Common myeloid progenitor, CD34-positive (primary cell): ENCODE measurements at regions of chr1 and their contacts with region 1.

Region 1: DNA sequence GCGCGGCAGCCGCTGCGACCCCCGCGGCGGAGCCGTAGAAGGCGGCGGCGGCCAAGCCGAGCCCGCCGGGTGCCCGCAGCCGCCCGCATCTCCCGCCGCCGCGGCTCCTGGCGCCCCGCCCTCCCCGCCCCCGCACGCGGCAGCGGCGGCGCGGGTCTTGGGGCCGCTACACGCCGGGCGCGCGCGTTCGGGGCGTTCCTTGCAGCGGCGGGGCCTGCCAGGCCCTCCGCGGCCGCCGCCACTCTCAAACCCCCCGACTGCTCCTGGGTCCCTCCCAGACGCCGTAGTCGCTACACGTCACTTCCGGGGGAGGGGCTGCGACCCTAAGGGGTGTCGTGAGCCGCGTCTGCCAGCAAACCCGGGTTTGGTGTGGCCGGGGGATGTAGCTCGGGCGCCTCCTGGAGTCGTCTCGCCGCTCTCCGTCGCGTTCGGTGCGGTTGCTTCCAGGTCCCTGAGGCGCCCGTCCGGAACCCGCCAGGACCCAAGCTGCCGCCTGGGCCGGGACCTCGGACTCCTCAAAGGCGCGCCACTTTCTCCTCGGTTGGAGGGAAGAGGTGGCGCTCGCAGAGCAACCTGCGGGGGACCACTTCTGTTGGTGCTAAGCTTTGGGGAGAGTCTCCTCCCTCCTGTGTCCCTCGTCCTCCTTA is at the start of gene ELK4:
- DNase-seq: peak; percentile 99 to 100 (median 99)
- H3K4me3 ChIP-seq: peak within 1 kb of the TSS; percentile 67 to 95 (median 90)
- H3K27ac ChIP-seq: peak within 1 kb of the TSS; percentile 80 to 92
- H3K4me1 ChIP-seq: peaks cover 8 to 26% (median 21%) of the 10 kb centered on the region in 4 experiments
- H3K27me3 ChIP-seq: no peaks in the 10 kb centered on the region

Region 2: GRCh38 chr1:205077158-205077933 is 554.5 kb before region 1 on chr1:
- CTCF ChIA-PET with region 1: no interaction called
- POLR2A ChIA-PET with region 1: no interaction called
- DNase-seq: no peak
- H3K4me3 ChIP-seq: no peak overlapping the region
- H3K27ac ChIP-seq: no peak overlapping the region
- H3K4me1 ChIP-seq: no peaks in the 10 kb centered on the region
- H3K27me3 ChIP-seq: no peaks in the 10 kb centered on the region

Region 3: DNA sequence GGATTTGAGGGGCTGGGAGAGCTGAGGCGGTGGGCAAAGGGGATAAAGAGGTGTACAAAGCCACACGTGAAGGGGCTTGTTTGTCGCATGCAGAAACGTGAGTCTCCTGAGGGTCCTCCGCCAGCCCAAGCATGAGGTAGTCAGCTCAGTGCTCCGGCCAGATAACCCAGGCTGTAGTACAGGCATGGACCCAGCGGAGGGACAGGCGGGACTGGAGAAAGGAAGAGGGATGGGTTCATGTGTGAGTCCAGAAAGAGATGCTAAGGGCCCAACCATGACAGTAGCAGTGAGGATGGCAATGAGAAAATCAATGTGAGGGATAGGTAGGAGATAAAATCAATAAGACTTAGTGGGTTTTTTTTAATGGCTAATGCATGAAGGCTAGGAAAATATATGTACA is 13.7 kb after region 1 on chr1:
- CTCF ChIA-PET with region 1: interaction called, 18 read pairs
- POLR2A ChIA-PET with region 1: interaction called, 3 read pairs
- DNase-seq: no peak
- H3K4me3 ChIP-seq: no peak overlapping the region
- H3K27ac ChIP-seq: no peak overlapping the region
- H3K4me1 ChIP-seq: no peaks in the 10 kb centered on the region
- H3K27me3 ChIP-seq: no peaks in the 10 kb centered on the region